CD4-positive, alpha-beta T cell (primary cell): ENCODE measurements at regions of chr1 and their contacts with region 1.

Region 1: GRCh38 chr1:78114034-78114956 is 68.5 kb downstream of the GIPC2 start:
- DNase-seq: peak; percentile 12 to 79 (median 36)
- ATAC-seq: peak; percentile 96
- H3K4me3 ChIP-seq: no peak overlapping the region
- H3K4me3 Mint-ChIP-seq: no peak overlapping the region
- H3K27ac ChIP-seq: no peak overlapping the region
- H3K27ac Mint-ChIP-seq: no peak overlapping the region
- H3K4me1 ChIP-seq: no peaks in the 10 kb centered on the region
- H3K4me1 Mint-ChIP-seq: no peaks in the 10 kb centered on the region
- H3K27me3 ChIP-seq: no peaks in the 10 kb centered on the region
- H3K27me3 Mint-ChIP-seq: no peaks in the 10 kb centered on the region
- CTCF ChIP-seq: peak; percentile 97

Region 2: GRCh38 chr1:77143529-77144121 is 970.7 kb before region 1 on chr1:
- CTCF ChIA-PET with region 1: no interaction called
- POLR2A ChIA-PET with region 1: no interaction called
- intact Hi-C with region 1: loop called (anchors 2 to 5 kb)
- DNase-seq: peak in 3 of 14 experiments; percentile 27 to 29 (median 28)
- ATAC-seq: no peak
- H3K4me3 ChIP-seq: no peak overlapping the region
- H3K4me3 Mint-ChIP-seq: no peak overlapping the region
- H3K27ac ChIP-seq: no peak overlapping the region
- H3K27ac Mint-ChIP-seq: no peak overlapping the region
- H3K4me1 ChIP-seq: no peaks in the 10 kb centered on the region
- H3K4me1 Mint-ChIP-seq: peaks cover 8% of the 10 kb centered on the region
- H3K27me3 ChIP-seq: no peaks in the 10 kb centered on the region
- H3K27me3 Mint-ChIP-seq: no peaks in the 10 kb centered on the region
- CTCF ChIP-seq: peak; percentile 53

Region 3: GRCh38 chr1:77739235-77739634 is 375.1 kb before region 1 on chr1:
- CTCF ChIA-PET with region 1: no interaction called
- POLR2A ChIA-PET with region 1: no interaction called
- intact Hi-C with region 1: loop called in 1 of 2 experiments (anchors 10 kb)
- DNase-seq: no peak
- ATAC-seq: no peak
- H3K4me3 ChIP-seq: no peak overlapping the region
- H3K4me3 Mint-ChIP-seq: no peak overlapping the region
- H3K27ac ChIP-seq: no peak overlapping the region
- H3K27ac Mint-ChIP-seq: no peak overlapping the region
- H3K4me1 ChIP-seq: no peaks in the 10 kb centered on the region
- H3K4me1 Mint-ChIP-seq: peaks cover 16% of the 10 kb centered on the region
- H3K27me3 ChIP-seq: no peaks in the 10 kb centered on the region
- H3K27me3 Mint-ChIP-seq: no peaks in the 10 kb centered on the region
- CTCF ChIP-seq: no peak

Region 4: DNA sequence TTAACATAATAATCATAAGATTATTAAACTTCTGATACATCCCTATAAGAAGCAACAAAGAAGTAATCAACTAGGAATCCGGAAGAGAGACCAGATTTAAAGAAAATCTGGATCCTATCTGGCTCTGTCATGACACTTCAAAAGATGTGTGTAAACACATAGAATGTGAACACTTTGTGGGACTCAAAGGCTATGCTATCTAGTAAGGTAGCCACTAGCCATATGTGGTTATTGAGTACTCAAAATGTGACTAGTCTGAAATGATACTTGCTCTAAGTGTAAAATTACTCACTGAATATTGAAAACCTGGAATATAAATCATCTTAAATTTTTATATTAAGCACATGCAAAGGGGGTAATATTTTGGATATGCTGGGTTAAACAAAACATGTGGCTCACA is 144.1 kb before region 1 on chr1:
- CTCF ChIA-PET with region 1: interaction called, 4 read pairs
- POLR2A ChIA-PET with region 1: no interaction called
- intact Hi-C with region 1: loop called in 1 of 2 experiments (anchors 5 kb)
- DNase-seq: no peak
- ATAC-seq: no peak
- H3K4me3 ChIP-seq: no peak overlapping the region
- H3K4me3 Mint-ChIP-seq: no peak overlapping the region
- H3K27ac ChIP-seq: no peak overlapping the region
- H3K27ac Mint-ChIP-seq: no peak overlapping the region
- H3K4me1 ChIP-seq: peaks cover 24% of the 10 kb centered on the region
- H3K4me1 Mint-ChIP-seq: peaks cover 77% of the 10 kb centered on the region
- H3K27me3 ChIP-seq: no peaks in the 10 kb centered on the region
- H3K27me3 Mint-ChIP-seq: no peaks in the 10 kb centered on the region
- CTCF ChIP-seq: no peak

Region 5: GRCh38 chr1:78911956-78912880 is 797.9 kb after region 1 on chr1:
- CTCF ChIA-PET with region 1: no interaction called
- POLR2A ChIA-PET with region 1: no interaction called
- intact Hi-C with region 1: no loop called
- DNase-seq: peak in 1 of 14 experiments; percentile 3
- ATAC-seq: no peak
- H3K4me3 ChIP-seq: no peak overlapping the region
- H3K4me3 Mint-ChIP-seq: no peak overlapping the region
- H3K27ac ChIP-seq: no peak overlapping the region
- H3K27ac Mint-ChIP-seq: no peak overlapping the region
- H3K4me1 ChIP-seq: no peaks in the 10 kb centered on the region
- H3K4me1 Mint-ChIP-seq: no peaks in the 10 kb centered on the region
- H3K27me3 ChIP-seq: no peaks in the 10 kb centered on the region
- H3K27me3 Mint-ChIP-seq: no peaks in the 10 kb centered on the region
- CTCF ChIP-seq: no peak